ENCODE measurements at regions of chr12 and their contacts with region 1.

Region 1: GRCh38 chr12:8949342-8950220 is at the start of gene M6PR:
- DNase-seq: peak; percentile 89 to 92 (median 91)
- H3K4me3 ChIP-seq: peak within 1 kb of the TSS; percentile 96 to 99
- H3K4me3 Mint-ChIP-seq: peak within 1 kb of the TSS; percentile 86 to 97 (median 96)
- H3K27ac ChIP-seq: peak within 1 kb of the TSS; percentile 96
- H3K27ac Mint-ChIP-seq: peak within 1 kb of the TSS; percentile 87 to 99 (median 95)
- H3K4me1 ChIP-seq: peaks cover 64% of the 10 kb centered on the region
- H3K4me1 Mint-ChIP-seq: peaks cover 51 to 84% (median 65%) of the 10 kb centered on the region in 4 donors
- H3K27me3 ChIP-seq: no peaks in the 10 kb centered on the region
- H3K27me3 Mint-ChIP-seq: no peaks in the 10 kb centered on the region
- total RNA-seq, gene M6PR: 226 to 247 TPM

Region 2: GRCh38 chr12:8697476-8698131 is 252.0 kb before region 1 on chr12 and contains the start of gene RIMKLB:
- CTCF ChIA-PET with region 1: no interaction called
- POLR2A ChIA-PET with region 1: interaction called, 15 read pairs
- intact Hi-C with region 1: loop called (anchors 2 kb)
- DNase-seq: peak; percentile 69 to 77 (median 75)
- H3K4me3 ChIP-seq: peak within 1 kb of the TSS; percentile 38 to 74
- H3K4me3 Mint-ChIP-seq: peak within 1 kb of the TSS; percentile 90 to 96 (median 92)
- H3K27ac ChIP-seq: peak within 1 kb of the TSS; percentile 59
- H3K27ac Mint-ChIP-seq: peak within 1 kb of the TSS; percentile 87 to 97 (median 91)
- H3K4me1 ChIP-seq: peaks cover 18% of the 10 kb centered on the region
- H3K4me1 Mint-ChIP-seq: peaks cover 19 to 29% (median 22%) of the 10 kb centered on the region in 4 donors
- H3K27me3 ChIP-seq: no peaks in the 10 kb centered on the region
- H3K27me3 Mint-ChIP-seq: no peaks in the 10 kb centered on the region
- total RNA-seq, gene RIMKLB: 23.0 to 27.3 TPM

Region 3: DNA sequence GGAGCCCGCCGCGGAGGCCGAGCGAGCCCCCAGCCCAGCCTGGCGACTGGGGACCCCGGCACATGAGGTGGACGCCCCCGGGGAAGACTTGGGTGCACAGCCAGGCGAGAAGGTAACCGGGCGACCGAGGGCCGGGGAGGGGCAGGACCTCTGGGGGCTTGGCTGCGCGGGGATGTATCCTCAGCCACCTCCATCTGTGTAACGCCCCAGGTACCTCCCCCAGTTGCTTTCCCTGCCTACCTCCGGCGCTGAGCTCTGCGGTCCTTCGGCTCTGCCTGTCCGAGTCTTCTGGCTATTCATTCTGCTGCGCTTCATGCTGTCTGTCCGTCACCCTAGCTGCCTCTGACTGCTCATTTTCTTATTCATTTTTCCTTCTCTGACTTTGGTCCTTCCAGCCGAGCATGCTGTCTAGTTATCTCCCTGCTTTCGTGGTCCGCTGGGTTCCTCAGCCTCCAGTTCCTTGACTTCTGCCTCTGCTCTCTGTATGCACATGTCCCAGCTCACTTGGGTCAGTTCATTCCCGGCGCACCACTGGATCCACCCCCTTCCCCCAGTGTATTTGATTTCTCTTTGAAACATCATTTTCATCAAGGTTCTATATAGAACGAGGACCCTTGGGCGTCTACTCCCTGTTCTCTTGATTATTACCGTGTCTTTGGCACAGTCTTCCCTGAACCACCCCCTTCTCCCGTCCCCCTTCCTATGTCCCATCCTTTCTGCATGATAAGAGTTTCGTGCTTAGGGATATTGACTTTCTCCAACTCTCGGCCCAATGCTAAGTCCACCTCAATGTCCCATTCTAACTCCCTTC is 34.7 kb before region 1 on chr12:
- CTCF ChIA-PET with region 1: interaction called, 27 read pairs
- POLR2A ChIA-PET with region 1: interaction called, 39 read pairs
- intact Hi-C with region 1: loop called (anchors 1 kb)
- DNase-seq: peak; percentile 65 to 80 (median 70)
- H3K4me3 ChIP-seq: peak overlapping the region; percentile 81 to 92
- H3K4me3 Mint-ChIP-seq: no peak overlapping the region
- H3K27ac ChIP-seq: peak overlapping the region; percentile 63
- H3K27ac Mint-ChIP-seq: no peak overlapping the region
- H3K4me1 ChIP-seq: peaks cover 36% of the 10 kb centered on the region
- H3K4me1 Mint-ChIP-seq: peaks cover 10 to 17% (median 14%) of the 10 kb centered on the region in 4 donors
- H3K27me3 ChIP-seq: no peaks in the 10 kb centered on the region
- H3K27me3 Mint-ChIP-seq: no peaks in the 10 kb centered on the region

Region 4: GRCh38 chr12:8996682-8997360 is 47.2 kb after region 1 on chr12:
- CTCF ChIA-PET with region 1: interaction called, 19 read pairs
- POLR2A ChIA-PET with region 1: interaction called, 32 read pairs
- intact Hi-C with region 1: loop called (anchors 1 kb)
- DNase-seq: peak in 4 of 5 donors; percentile 4 to 46 (median 16)
- H3K4me3 ChIP-seq: no peak overlapping the region
- H3K4me3 Mint-ChIP-seq: peak overlapping the region in 7 of 8 donors; percentile 66 to 95 (median 79)
- H3K27ac ChIP-seq: peak overlapping the region; percentile 27
- H3K27ac Mint-ChIP-seq: peak overlapping the region; percentile 71 to 93 (median 88)
- H3K4me1 ChIP-seq: peaks cover 81% of the 10 kb centered on the region
- H3K4me1 Mint-ChIP-seq: peaks cover 51 to 82% (median 67%) of the 10 kb centered on the region in 4 donors
- H3K27me3 ChIP-seq: no peaks in the 10 kb centered on the region
- H3K27me3 Mint-ChIP-seq: no peaks in the 10 kb centered on the region

Region 5: DNA sequence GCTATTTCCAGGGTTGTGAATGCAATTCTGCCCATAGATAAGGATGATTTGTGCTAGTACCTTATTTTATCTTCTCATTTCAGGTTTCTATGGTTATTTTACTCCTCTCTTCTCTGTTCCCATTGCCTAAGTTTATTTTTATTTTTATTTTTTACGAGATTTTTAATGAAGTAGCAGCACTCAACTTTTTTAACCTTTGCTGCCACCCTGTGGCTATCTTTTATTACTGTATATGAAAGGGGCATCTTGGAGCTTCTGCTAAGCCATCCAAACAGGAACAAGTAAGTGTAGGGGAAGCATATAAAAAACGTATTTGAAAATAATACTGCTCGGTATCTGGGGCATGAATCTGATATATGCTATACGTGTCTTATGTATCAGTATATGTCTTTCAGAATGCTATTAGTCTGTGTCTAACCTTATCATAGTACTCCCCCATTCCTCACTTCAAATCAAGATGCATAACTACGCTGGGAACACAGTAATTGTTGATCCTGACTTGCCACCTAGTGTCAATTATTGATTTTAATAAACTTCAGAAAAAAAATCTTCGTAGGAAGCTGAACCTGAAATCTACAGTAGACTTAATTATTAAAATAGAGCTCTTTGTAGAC is 100.0 kb after region 1 on chr12:
- CTCF ChIA-PET with region 1: interaction called, 358 read pairs
- POLR2A ChIA-PET with region 1: interaction called, 122 read pairs
- intact Hi-C with region 1: loop called (anchors 1 kb)
- DNase-seq: peak; percentile 39 to 66 (median 60)
- H3K4me3 ChIP-seq: no peak overlapping the region
- H3K4me3 Mint-ChIP-seq: peak overlapping the region in 2 of 8 donors; percentile 26 to 55
- H3K27ac ChIP-seq: no peak overlapping the region
- H3K27ac Mint-ChIP-seq: peak overlapping the region; percentile 26 to 90 (median 51)
- H3K4me1 ChIP-seq: peaks cover 25% of the 10 kb centered on the region
- H3K4me1 Mint-ChIP-seq: peaks cover 20 to 46% (median 35%) of the 10 kb centered on the region in 4 donors
- H3K27me3 ChIP-seq: no peaks in the 10 kb centered on the region
- H3K27me3 Mint-ChIP-seq: no peaks in the 10 kb centered on the region